CD14-positive monocyte (primary cell): ENCODE measurements at regions of chr6 and their contacts with region 1.

Region 1: DNA sequence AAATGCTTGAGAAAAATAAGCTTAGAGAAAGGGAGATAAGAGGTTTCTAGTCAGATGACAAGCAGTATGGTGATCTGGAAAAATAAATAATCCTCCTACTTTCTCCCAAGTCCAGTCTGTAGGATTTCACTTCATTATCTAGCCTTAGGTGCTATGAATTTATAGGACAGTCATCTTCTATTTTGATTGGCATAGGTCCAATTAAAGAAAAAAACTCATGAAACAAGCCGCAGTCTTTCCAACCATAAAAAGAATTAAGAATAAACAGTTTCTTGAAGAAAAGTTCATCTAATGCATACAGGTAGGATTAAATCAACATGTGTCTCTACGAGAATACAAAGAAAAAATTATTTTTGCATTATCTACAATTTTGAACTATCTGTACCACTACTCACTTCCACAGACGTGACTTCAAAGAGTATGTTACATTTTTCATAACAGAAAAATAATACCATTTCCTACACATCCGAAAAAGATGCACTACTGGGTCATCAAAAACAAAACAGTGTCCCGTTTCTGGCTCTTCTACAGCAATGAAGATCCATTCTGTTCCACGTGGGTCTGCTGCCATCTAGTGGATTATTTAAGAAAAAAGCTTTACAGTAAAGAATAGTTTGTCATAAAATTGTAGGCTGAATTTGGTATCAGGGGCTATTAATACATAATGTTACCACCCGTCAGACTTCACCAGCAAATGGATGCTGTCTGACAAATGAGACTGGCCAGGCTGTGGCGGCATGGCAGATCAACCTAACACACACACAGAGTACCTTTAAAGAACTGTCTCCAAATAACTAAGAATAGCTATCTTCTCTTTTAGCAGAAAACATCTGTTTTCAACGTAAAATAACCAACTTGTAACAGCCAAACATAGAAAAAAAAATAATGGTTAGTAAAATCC is 28.9 kb downstream of the STX7 start:
- DNase-seq: peak; percentile 37 to 63 (median 58)
- H3K4me3 ChIP-seq: no peak overlapping the region
- H3K4me3 Mint-ChIP-seq: no peak overlapping the region
- H3K27ac ChIP-seq: no peak overlapping the region
- H3K27ac Mint-ChIP-seq: peak overlapping the region in 2 of 7 donors; percentile 13 to 57
- H3K4me1 ChIP-seq: no peaks in the 10 kb centered on the region
- H3K4me1 Mint-ChIP-seq: peaks cover 23% of the 10 kb centered on the region
- H3K27me3 ChIP-seq: no peaks in the 10 kb centered on the region
- H3K27me3 Mint-ChIP-seq: no peaks in the 10 kb centered on the region
- CTCF ChIP-seq: peak; percentile 78

Region 2: GRCh38 chr6:132279592-132280139 is 204.4 kb before region 1 on chr6:
- intact Hi-C with region 1: loop called (anchors 5 kb)
- DNase-seq: peak; percentile 48 to 67 (median 61)
- H3K4me3 ChIP-seq: peak overlapping the region; percentile 16 to 74 (median 69)
- H3K4me3 Mint-ChIP-seq: peak overlapping the region; percentile 70 to 95
- H3K27ac ChIP-seq: no peak overlapping the region
- H3K27ac Mint-ChIP-seq: peak overlapping the region in 2 of 7 donors; percentile 4 to 68
- H3K4me1 ChIP-seq: no peaks in the 10 kb centered on the region
- H3K4me1 Mint-ChIP-seq: no peaks in the 10 kb centered on the region
- H3K27me3 ChIP-seq: no peaks in the 10 kb centered on the region
- H3K27me3 Mint-ChIP-seq: peaks cover 3 to 8% (median 7%) of the 10 kb centered on the region in 3 donors
- CTCF ChIP-seq: peak; percentile 99

Region 3: GRCh38 chr6:132780770-132781371 is 296.8 kb after region 1 on chr6:
- intact Hi-C with region 1: no loop called
- DNase-seq: no peak
- H3K4me3 ChIP-seq: no peak overlapping the region
- H3K4me3 Mint-ChIP-seq: no peak overlapping the region
- H3K27ac ChIP-seq: no peak overlapping the region
- H3K27ac Mint-ChIP-seq: no peak overlapping the region
- H3K4me1 ChIP-seq: no peaks in the 10 kb centered on the region
- H3K4me1 Mint-ChIP-seq: no peaks in the 10 kb centered on the region
- H3K27me3 ChIP-seq: no peaks in the 10 kb centered on the region
- H3K27me3 Mint-ChIP-seq: peaks cover 0 to 4% (median 1%) of the 10 kb centered on the region in 3 donors
- CTCF ChIP-seq: peak; percentile 47

Region 4: DNA sequence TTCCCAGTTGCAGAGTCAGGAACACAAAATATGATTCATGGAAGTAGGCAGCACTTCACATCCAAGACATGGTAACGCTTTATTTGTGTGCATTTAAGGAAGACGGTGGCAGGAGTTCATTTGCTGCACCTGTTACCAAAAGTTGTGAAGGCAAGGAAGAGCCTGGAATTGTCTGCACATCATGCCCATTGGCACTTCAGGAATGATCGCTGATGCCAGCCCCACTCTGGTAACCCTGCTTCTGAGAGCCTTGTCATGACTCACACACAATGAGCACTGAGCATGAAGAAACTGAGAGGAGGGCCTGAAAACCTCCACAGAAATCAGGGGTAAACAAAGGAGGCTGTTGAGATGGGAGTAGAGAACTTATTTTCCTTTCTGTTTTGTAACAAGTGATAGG is 511.4 kb after region 1 on chr6:
- intact Hi-C with region 1: no loop called
- DNase-seq: no peak
- H3K4me3 ChIP-seq: no peak overlapping the region
- H3K4me3 Mint-ChIP-seq: no peak overlapping the region
- H3K27ac ChIP-seq: no peak overlapping the region
- H3K27ac Mint-ChIP-seq: no peak overlapping the region
- H3K4me1 ChIP-seq: no peaks in the 10 kb centered on the region
- H3K4me1 Mint-ChIP-seq: no peaks in the 10 kb centered on the region
- H3K27me3 ChIP-seq: no peaks in the 10 kb centered on the region
- H3K27me3 Mint-ChIP-seq: peaks cover 0 to 2% (median 0%) of the 10 kb centered on the region in 3 donors
- CTCF ChIP-seq: no peak